ENCODE measurements at regions of chr1 and their contacts with region 1.

Region 1: GRCh38 chr1:170074250-170075157 is at the start of gene KIFAP3:
- DNase-seq: peak; percentile 98
- H3K4me3 Mint-ChIP-seq: peak within 1 kb of the TSS; percentile 96
- H3K27ac Mint-ChIP-seq: peak within 1 kb of the TSS; percentile 85
- H3K4me1 Mint-ChIP-seq: peaks cover 46% of the 10 kb centered on the region
- H3K27me3 Mint-ChIP-seq: no peaks in the 10 kb centered on the region
- total RNA-seq, gene KIFAP3: 15.6 to 15.7 TPM

Region 2: DNA sequence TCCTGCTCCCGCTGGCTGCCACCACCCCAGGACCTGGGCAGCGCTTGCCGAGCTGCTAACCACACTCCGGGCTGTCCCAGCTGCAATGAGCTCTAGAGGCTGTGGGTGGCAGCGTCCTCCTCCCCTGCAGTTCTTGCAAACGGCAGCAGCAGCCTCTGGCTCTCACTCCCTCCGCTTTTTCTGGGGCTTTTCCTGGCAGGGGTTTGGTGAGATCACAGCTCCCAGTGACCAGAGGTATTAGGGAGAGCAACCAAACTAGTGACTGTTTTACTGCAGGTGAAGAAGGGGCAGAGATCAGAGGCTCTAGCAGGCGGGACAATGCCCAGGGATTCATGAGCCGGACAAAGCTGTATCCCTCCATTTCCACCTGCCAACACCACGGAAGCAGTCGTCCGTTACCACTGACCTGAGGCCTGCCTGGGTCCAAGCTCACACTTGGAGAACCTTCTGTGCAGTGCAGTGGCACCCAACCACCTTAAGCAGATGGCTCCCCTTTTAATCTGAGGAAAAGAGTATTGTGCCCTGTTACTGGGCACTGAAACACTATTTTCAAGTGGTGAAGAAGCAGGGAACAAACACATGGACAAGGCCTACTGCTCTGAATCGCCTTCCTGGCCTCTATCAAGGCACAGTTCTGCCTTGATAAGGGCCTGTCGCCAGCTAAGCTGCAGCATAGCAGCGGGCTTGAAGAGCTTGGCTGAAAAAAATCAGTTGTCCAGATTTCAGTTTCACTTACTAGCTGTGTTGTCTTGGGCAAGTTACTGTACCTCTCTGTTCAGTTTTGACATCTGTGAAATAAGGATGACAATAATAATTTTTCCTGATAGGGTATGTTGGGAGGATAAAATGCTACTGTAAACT is 487.9 kb before region 1 on chr1 and contains the start of gene F5:
- CTCF ChIA-PET with region 1: no interaction called
- POLR2A ChIA-PET with region 1: no interaction called
- intact Hi-C with region 1: loop called (anchors 5 kb)
- DNase-seq: peak; percentile 90
- H3K4me3 Mint-ChIP-seq: peak within 1 kb of the TSS; percentile 96
- H3K27ac Mint-ChIP-seq: peak within 1 kb of the TSS; percentile 94
- H3K4me1 Mint-ChIP-seq: peaks cover 61% of the 10 kb centered on the region
- H3K27me3 Mint-ChIP-seq: no peaks in the 10 kb centered on the region
- total RNA-seq, gene F5: 50.8 to 51.1 TPM

Region 3: GRCh38 chr1:169794530-169795416 is 279.7 kb before region 1 on chr1 and contains the start of gene METTL18:
- CTCF ChIA-PET with region 1: no interaction called
- POLR2A ChIA-PET with region 1: no interaction called
- intact Hi-C with region 1: loop called (anchors 1 kb)
- DNase-seq: peak; percentile 96
- H3K4me3 Mint-ChIP-seq: peak within 1 kb of the TSS; percentile 100
- H3K27ac Mint-ChIP-seq: peak within 1 kb of the TSS; percentile 99
- H3K4me1 Mint-ChIP-seq: peaks cover 44% of the 10 kb centered on the region
- H3K27me3 Mint-ChIP-seq: no peaks in the 10 kb centered on the region
- total RNA-seq, gene METTL18: 10.8 to 10.9 TPM

Region 4: GRCh38 chr1:169928438-169929209 is 145.9 kb before region 1 on chr1:
- CTCF ChIA-PET with region 1: no interaction called
- POLR2A ChIA-PET with region 1: no interaction called
- intact Hi-C with region 1: loop called (anchors 5 kb)
- DNase-seq: no peak
- H3K4me3 Mint-ChIP-seq: no peak overlapping the region
- H3K27ac Mint-ChIP-seq: no peak overlapping the region
- H3K4me1 Mint-ChIP-seq: peaks cover 7% of the 10 kb centered on the region
- H3K27me3 Mint-ChIP-seq: no peaks in the 10 kb centered on the region

Region 5: DNA sequence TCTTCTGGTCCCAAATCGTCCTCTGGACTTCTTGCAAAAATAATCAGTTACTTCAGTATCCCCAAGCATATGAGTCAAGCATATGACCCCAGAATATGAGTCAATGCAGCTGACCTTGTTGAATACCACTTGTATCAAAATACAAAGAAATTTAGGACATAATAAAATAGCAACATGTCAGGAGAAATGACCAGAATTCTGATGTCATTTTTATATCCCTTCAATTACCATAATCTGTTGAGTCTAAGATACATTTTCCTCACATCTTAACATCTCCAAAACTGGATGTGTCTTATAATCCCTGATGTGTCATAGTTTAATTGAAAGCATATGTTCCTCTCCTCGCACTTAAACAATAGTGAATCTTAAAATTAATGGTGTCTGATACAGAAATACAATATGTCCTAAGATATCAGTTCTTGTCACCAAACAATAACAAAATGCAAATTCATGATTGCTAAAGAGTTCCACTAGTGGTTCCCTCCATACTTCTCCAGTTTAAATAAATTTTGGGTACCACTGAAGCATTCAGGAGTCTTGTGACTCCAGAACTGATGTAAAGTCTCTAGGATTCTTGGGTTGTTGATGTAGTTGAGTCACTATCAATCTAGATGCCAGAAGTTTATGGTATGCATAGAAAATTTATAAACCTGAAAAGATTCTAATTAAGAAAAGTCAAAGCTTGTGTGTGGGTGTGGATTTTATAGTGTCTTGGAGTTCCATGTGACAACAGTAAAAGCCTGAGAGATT is 41.8 kb before region 1 on chr1:
- CTCF ChIA-PET with region 1: no interaction called
- POLR2A ChIA-PET with region 1: no interaction called
- intact Hi-C with region 1: loop called (anchors 5 kb)
- DNase-seq: no peak
- H3K4me3 Mint-ChIP-seq: no peak overlapping the region
- H3K27ac Mint-ChIP-seq: no peak overlapping the region
- H3K4me1 Mint-ChIP-seq: no peaks in the 10 kb centered on the region
- H3K27me3 Mint-ChIP-seq: no peaks in the 10 kb centered on the region

Region 6: DNA sequence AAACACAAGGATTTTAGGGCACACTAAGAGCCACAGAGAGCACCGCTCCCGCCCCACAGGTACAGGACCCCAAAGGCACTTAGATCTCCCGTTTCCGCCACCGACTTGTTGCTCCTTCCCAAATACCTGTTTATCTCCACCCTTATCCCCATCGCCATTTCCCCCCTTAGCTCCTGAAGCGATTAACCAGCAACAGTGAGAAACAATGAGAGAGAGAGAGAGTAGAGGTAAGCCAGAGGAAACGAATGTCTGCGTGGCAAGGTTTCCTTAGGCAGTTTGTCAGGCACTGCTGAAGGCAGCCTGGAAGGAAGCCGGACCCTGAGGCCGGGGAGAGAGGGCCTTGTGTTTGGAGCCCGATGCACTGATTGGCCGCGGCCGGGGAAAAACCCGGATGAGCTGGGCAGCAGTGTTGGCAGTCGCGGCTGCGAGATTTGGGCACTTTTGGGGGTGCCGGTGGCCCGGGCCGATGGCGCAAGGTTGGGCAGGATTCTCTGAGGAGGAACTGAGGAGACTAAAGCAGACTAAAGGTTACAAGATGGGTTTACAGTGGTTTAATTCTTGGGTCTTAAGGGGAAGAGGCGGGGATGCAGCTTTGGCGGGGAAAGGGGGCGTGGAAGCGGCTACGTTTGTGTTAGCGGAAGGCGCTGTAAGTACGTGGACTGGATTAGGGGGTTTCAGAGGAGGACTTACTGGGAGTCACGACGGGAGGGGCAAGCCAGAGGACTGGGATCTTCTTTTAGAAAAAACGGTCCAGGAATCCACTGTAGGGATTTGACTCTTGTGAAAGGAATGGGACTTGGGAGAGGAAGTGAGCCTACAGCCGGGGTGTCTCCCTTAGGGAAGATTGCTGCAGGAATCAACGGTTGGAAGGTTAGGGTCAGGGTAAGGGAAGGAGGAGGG is 457.5 kb after region 1 on chr1 and contains the start of gene GORAB:
- CTCF ChIA-PET with region 1: no interaction called
- POLR2A ChIA-PET with region 1: interaction called, 5 read pairs
- intact Hi-C with region 1: loop called (anchors 1 kb)
- DNase-seq: peak; percentile 93
- H3K4me3 Mint-ChIP-seq: no peak within 1 kb of the TSS
- H3K27ac Mint-ChIP-seq: no peak within 1 kb of the TSS
- H3K4me1 Mint-ChIP-seq: peaks cover 15% of the 10 kb centered on the region
- H3K27me3 Mint-ChIP-seq: no peaks in the 10 kb centered on the region
- total RNA-seq, gene GORAB: 8.5 to 9.0 TPM

Measured in activated CD4-positive, alpha-beta memory T cell treated with anti-CD3 and anti-CD28 coated beads for 36 hours (primary cell).